GM10248 (cell line): ENCODE measurements at regions of chr9 and their contacts with region 1.

Region 1: DNA sequence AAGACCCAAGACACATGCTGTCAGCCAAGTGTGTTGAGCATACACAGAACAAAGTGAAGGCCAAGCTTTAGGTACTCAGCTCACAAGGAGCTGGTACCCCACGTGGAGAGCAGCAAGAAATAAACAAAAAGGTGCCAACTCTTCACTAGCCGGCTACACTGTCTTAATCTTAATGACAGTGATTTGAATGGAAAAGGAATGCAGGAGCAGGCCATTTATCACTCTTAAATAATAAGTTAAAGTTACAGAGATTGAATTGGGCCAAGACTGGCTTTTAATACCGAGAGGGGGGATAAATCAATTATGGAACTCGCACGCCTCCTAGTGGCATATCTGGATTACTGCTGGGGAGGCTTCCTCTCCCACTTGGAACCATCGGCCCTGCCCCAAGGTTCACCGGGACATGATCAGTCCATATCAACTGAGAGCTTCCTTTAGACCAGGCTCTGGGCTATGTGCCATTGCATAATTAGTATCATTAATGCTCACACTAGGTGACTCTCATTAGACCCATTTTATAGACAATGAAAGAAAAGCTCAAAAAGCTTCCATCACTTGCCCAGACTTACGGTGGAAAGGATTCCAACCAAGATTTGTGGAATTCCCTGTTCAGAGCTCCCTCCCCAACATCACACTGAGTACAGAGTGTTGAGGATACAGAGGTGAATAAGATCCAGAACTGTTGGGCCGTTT is 94.0 kb downstream of the ACTL7B start:
- DNase-seq: peak; percentile 66
- CTCF ChIP-seq: peak; percentile 68

Region 2: DNA sequence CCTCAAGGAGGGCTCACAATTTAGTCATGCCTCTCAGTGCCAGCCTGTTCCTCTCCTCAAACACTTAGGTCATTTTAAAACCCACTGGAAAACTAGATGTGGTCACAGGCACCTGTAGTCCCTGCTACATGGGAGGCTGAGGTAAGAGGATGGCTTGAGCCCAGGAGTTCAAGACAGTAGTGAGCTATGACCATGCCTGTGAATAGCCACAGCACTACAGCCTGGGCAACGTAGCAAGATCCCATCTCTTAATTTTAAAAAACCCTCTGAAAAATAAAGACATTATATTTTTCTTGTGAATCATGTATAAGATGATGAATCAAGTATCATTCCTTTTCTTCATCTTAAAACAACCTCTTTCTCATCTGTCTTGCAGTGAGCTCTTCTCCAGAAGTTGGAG is 1318.0 kb before region 1 on chr9:
- CTCF ChIA-PET with region 1: interaction called, 11 read pairs
- POLR2A ChIA-PET with region 1: no interaction called
- DNase-seq: no peak
- CTCF ChIP-seq: no peak

Region 3: GRCh38 chr9:107465467-107466451 is 1296.0 kb before region 1 on chr9:
- CTCF ChIA-PET with region 1: interaction called, 10 read pairs
- POLR2A ChIA-PET with region 1: no interaction called
- DNase-seq: peak; percentile 70
- CTCF ChIP-seq: peak; percentile 49

Region 4: DNA sequence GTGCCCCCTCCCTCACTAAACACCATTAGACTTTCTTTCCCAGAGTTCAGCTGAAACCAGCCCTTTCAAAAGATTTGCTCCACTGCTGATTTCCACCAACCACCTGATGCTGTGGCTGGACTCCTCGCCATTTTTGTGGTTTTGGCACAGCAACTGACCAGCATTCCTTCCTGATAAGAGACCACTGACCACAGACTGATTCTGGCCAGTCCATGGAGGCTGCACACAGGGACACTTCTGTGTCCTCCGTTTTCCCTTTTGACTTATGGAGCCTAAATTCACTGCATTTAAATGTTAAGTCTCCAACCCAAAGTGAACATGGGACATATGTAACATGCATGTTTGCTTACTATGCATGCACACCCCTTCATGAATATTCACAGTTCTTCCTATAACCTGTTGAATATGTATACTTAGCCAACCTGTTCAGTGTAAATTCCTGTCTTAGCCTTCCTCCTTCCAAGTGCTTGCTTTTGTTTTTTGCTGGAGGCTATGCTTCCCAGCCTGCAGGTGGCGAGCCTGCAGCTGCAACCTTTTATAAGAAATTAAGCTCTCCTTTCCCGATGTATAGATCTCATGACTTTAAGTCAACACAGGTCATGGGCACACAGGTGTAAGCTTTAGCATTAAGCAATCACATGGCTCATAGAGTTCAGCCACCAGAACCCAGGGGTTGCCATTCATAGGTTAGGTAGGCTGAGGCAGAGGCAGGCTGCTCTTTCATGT is 15.3 kb after region 1 on chr9:
- CTCF ChIA-PET with region 1: interaction called, 11 read pairs
- POLR2A ChIA-PET with region 1: no interaction called
- DNase-seq: no peak
- CTCF ChIP-seq: no peak